ENCODE measurements at regions of chr1 and their contacts with region 1.

Region 1: GRCh38 chr1:54070171-54070837 is 16.9 kb downstream of the TCEANC2 start:
- DNase-seq: peak; percentile 71
- ATAC-seq: peak; percentile 89
- H3K4me3 ChIP-seq: peak overlapping the region in 2 of 3 experiments; percentile 39 to 42; a peak in 2 of 6 replicates
- H3K27ac ChIP-seq: peak overlapping the region; percentile 57
- H3K4me1 ChIP-seq: peaks cover 25% of the 10 kb centered on the region
- H3K27me3 ChIP-seq: no peaks in the 10 kb centered on the region
- CTCF ChIP-seq: peak; percentile 74
- EP300 ChIP-seq: peak in 1 of 2 experiments; percentile 74; a peak in 2 of 4 replicates
- POLR2A ChIP-seq: no peak
- RAD21 ChIP-seq: peak; percentile 69

Region 2: DNA sequence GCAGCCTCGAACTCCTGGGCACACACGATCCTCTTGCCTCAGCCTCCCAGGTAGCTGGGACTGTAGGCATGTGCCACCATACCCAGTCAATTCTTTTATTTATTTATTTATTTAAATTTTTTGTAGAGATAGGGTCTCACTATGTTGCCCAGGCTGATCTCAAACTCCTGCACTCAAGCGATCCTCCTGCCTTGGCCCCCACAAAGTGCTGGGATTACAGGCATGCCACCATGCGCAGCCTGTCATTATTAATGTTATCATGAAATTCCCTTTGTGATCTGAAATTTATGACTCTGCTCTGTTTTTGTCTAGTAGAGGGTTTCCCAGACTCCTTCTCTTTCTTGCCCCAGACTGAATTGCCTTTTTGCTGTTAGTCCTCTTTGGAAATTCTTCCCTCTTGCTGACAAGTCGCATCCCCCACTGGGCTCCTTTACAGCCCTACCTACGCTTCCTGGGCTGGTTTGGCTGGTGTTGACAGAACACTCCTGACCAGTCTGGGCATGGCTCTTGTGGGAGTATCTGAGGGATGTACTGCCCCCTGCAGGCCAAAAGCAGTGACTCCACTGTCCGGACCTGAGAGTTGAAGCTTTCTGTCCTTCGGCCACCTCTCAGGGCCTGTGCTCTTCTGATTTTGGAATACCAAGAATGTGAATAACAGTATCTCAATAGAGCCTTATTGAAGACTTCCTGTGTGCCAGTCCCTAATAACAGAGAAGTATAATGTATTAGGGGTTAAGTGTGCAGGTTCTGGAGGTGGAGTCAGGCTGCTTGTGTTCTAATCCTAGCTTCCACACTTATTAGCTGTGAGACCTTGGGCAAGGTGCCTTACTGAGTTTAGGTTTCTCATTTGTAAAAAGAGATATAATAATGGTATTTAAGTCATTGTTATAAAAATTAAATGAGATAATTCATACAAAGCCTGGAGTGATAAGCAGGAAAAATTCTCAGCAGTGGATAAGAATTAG is 11.3 kb after region 1 on chr1:
- CTCF ChIA-PET with region 1: interaction called, 92 read pairs
- POLR2A ChIA-PET with region 1: interaction called, 15 read pairs
- in situ Hi-C with region 1: no loop called
- intact Hi-C with region 1: loop called (anchors 1 kb)
- DNase-seq: peak; percentile 87
- ATAC-seq: peak; percentile 98
- H3K4me3 ChIP-seq: no peak overlapping the region
- H3K27ac ChIP-seq: peak overlapping the region; percentile 61
- H3K4me1 ChIP-seq: peaks cover 53% of the 10 kb centered on the region
- H3K27me3 ChIP-seq: no peaks in the 10 kb centered on the region
- CTCF ChIP-seq: peak; percentile 95
- EP300 ChIP-seq: no peak
- POLR2A ChIP-seq: no peak
- RAD21 ChIP-seq: peak; percentile 88

Region 3: GRCh38 chr1:54199765-54200518 is 129.6 kb after region 1 on chr1 and contains the starts of genes CYB5RL and MRPL37:
- CTCF ChIA-PET with region 1: no interaction called
- POLR2A ChIA-PET with region 1: no interaction called
- in situ Hi-C with region 1: no loop called
- intact Hi-C with region 1: loop called (anchors 10 kb)
- DNase-seq: peak; percentile 97
- ATAC-seq: peak; percentile 96
- H3K4me3 ChIP-seq: peak within 1 kb of the TSS; percentile 89 to 95 (median 94)
- H3K27ac ChIP-seq: peak within 1 kb of the TSS; percentile 77
- H3K4me1 ChIP-seq: peaks cover 34% of the 10 kb centered on the region
- H3K27me3 ChIP-seq: no peaks in the 10 kb centered on the region; a peak in 1 of 5 replicates
- CTCF ChIP-seq: no peak
- EP300 ChIP-seq: no peak
- POLR2A ChIP-seq: peak; percentile 82 to 84
- RAD21 ChIP-seq: peak; percentile 28
- total RNA-seq, gene CYB5RL: 4.1 and 5.0 TPM in 2 replicates
- total RNA-seq, gene MRPL37: 127 and 143 TPM in 2 replicates